ENCODE measurements at regions of chr9 and their contacts with region 1.

Region 1: GRCh38 chr9:89318123-89319014 is at the start of gene SECISBP2:
- DNase-seq: peak; percentile 86 to 97 (median 92)
- ATAC-seq: peak; percentile 86
- H3K4me3 ChIP-seq: peak within 1 kb of the TSS; percentile 68 to 82
- H3K4me3 Mint-ChIP-seq: peak within 1 kb of the TSS; percentile 81
- H3K27ac ChIP-seq: peak within 1 kb of the TSS; percentile 99
- H3K27ac Mint-ChIP-seq: peak within 1 kb of the TSS; percentile 92
- H3K4me1 ChIP-seq: peaks cover 39% of the 10 kb centered on the region
- H3K4me1 Mint-ChIP-seq: peaks cover 57% of the 10 kb centered on the region
- H3K27me3 ChIP-seq: no peaks in the 10 kb centered on the region
- H3K27me3 Mint-ChIP-seq: no peaks in the 10 kb centered on the region
- CTCF ChIP-seq: no peak
- total RNA-seq, gene SECISBP2: 90.2 to 92.1 TPM

Region 2: DNA sequence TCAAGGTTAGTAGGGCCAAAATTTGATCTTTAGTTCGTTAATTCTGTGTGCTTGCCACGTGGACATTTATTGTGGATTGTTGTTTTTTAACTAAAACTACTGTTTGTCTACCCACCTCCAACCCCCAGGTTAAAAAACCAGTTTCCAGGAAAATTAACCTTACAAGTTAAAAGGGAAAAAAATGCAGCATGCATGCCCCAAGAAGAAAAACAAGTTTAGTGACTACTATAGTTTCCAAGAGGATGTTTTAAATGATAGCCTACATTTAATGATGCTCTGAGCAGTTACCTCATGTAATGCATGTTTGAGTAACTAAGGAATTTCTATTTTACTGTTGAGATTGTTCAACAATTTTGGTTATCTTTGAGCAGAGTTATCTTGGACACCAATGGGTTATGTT is 15.8 kb after region 1 on chr9:
- CTCF ChIA-PET with region 1: no interaction called
- POLR2A ChIA-PET with region 1: no interaction called
- intact Hi-C with region 1: no loop called
- DNase-seq: no peak
- ATAC-seq: no peak
- H3K4me3 ChIP-seq: no peak overlapping the region
- H3K4me3 Mint-ChIP-seq: no peak overlapping the region
- H3K27ac ChIP-seq: no peak overlapping the region
- H3K27ac Mint-ChIP-seq: no peak overlapping the region
- H3K4me1 ChIP-seq: no peaks in the 10 kb centered on the region
- H3K4me1 Mint-ChIP-seq: peaks cover 13% of the 10 kb centered on the region
- H3K27me3 ChIP-seq: no peaks in the 10 kb centered on the region
- H3K27me3 Mint-ChIP-seq: no peaks in the 10 kb centered on the region
- CTCF ChIP-seq: no peak

Region 3: GRCh38 chr9:89410641-89411350 is 92.4 kb after region 1 on chr9:
- CTCF ChIA-PET with region 1: interaction called, 3 read pairs
- POLR2A ChIA-PET with region 1: interaction called, 3 read pairs
- intact Hi-C with region 1: loop called in 1 of 2 experiments (anchors 2 kb)
- DNase-seq: peak in 3 of 9 experiments; percentile 23 to 72 (median 54)
- ATAC-seq: peak; percentile 30
- H3K4me3 ChIP-seq: no peak overlapping the region
- H3K4me3 Mint-ChIP-seq: peak overlapping the region; percentile 22
- H3K27ac ChIP-seq: peak overlapping the region in 1 of 2 experiments; percentile 29
- H3K27ac Mint-ChIP-seq: peak overlapping the region; percentile 84
- H3K4me1 ChIP-seq: peaks cover 62% of the 10 kb centered on the region
- H3K4me1 Mint-ChIP-seq: peaks cover 85% of the 10 kb centered on the region
- H3K27me3 ChIP-seq: no peaks in the 10 kb centered on the region
- H3K27me3 Mint-ChIP-seq: no peaks in the 10 kb centered on the region
- CTCF ChIP-seq: no peak

Region 4: DNA sequence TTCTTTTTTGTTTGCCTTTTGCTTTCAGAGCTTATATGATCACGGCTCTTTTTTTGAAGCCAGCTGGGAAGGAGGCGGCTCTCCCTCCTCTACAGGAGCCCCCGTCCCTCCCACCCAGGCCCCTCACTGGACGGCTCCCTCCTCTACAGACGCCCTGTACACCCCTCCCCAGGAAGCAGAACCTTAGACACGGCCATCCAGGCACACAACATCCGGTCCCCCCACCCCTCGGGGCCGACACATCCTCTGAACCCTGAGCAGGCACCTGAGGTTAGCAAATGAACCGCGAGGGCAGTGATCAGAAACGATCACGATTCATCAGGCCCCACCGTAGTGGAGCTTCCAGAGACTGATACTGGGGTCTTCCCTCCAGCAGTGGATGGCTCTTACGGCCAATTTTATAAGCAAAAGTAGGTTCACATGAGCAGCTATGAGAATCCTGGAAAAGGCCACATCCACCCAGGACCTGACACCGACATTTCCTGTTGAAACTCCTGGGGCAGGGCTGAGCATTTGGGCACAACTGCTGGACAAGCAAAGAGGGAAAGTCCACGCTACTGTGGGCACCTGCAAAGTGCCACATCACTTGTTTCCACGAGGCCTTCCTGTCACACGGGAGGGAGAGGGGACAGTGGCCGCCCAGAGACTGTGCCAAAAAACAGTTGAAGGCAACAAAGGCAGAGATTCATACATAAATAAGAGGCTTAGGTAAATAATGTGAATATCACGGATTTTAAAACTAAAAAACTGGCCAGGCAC is 100.7 kb after region 1 on chr9:
- CTCF ChIA-PET with region 1: no interaction called
- POLR2A ChIA-PET with region 1: no interaction called
- intact Hi-C with region 1: loop called in 1 of 2 experiments (anchors 5 kb)
- DNase-seq: peak; percentile 45 to 85 (median 77)
- ATAC-seq: peak; percentile 65
- H3K4me3 ChIP-seq: peak overlapping the region; percentile 27 to 36
- H3K4me3 Mint-ChIP-seq: peak overlapping the region; percentile 81
- H3K27ac ChIP-seq: peak overlapping the region; percentile 52 to 76
- H3K27ac Mint-ChIP-seq: peak overlapping the region; percentile 98
- H3K4me1 ChIP-seq: peaks cover 70% of the 10 kb centered on the region
- H3K4me1 Mint-ChIP-seq: peaks cover 88% of the 10 kb centered on the region
- H3K27me3 ChIP-seq: no peaks in the 10 kb centered on the region
- H3K27me3 Mint-ChIP-seq: no peaks in the 10 kb centered on the region
- CTCF ChIP-seq: no peak

Region 5: GRCh38 chr9:89522261-89522958 is 204.0 kb after region 1 on chr9:
- CTCF ChIA-PET with region 1: no interaction called
- POLR2A ChIA-PET with region 1: interaction called, 4 read pairs
- intact Hi-C with region 1: loop called in 1 of 2 experiments (anchors 2 kb)
- DNase-seq: peak; percentile 46 to 95 (median 77)
- ATAC-seq: peak; percentile 85
- H3K4me3 ChIP-seq: peak overlapping the region in 1 of 2 experiments; percentile 4
- H3K4me3 Mint-ChIP-seq: peak overlapping the region; percentile 48
- H3K27ac ChIP-seq: peak overlapping the region; percentile 60 to 71
- H3K27ac Mint-ChIP-seq: peak overlapping the region; percentile 95
- H3K4me1 ChIP-seq: peaks cover 96% of the 10 kb centered on the region
- H3K4me1 Mint-ChIP-seq: peaks cover 100% of the 10 kb centered on the region
- H3K27me3 ChIP-seq: no peaks in the 10 kb centered on the region
- H3K27me3 Mint-ChIP-seq: no peaks in the 10 kb centered on the region
- CTCF ChIP-seq: no peak

Region 6: GRCh38 chr9:90102292-90102901 is 784.0 kb after region 1 on chr9:
- CTCF ChIA-PET with region 1: no interaction called
- POLR2A ChIA-PET with region 1: no interaction called
- intact Hi-C with region 1: loop called in 1 of 2 experiments (anchors 2 kb)
- DNase-seq: peak; percentile 50 to 88 (median 71)
- ATAC-seq: peak; percentile 100
- H3K4me3 ChIP-seq: no peak overlapping the region
- H3K4me3 Mint-ChIP-seq: no peak overlapping the region
- H3K27ac ChIP-seq: no peak overlapping the region
- H3K27ac Mint-ChIP-seq: no peak overlapping the region
- H3K4me1 ChIP-seq: peaks cover 4% of the 10 kb centered on the region
- H3K4me1 Mint-ChIP-seq: peaks cover 5% of the 10 kb centered on the region
- H3K27me3 ChIP-seq: no peaks in the 10 kb centered on the region
- H3K27me3 Mint-ChIP-seq: peaks cover 13% of the 10 kb centered on the region
- CTCF ChIP-seq: peak; percentile 58

Measured in CD8-positive, alpha-beta T cell (primary cell).